Esophagus muscularis mucosa (tissue), 4 donors: ENCODE measurements at regions of chr11 and their contacts with region 1.

Region 1: DNA sequence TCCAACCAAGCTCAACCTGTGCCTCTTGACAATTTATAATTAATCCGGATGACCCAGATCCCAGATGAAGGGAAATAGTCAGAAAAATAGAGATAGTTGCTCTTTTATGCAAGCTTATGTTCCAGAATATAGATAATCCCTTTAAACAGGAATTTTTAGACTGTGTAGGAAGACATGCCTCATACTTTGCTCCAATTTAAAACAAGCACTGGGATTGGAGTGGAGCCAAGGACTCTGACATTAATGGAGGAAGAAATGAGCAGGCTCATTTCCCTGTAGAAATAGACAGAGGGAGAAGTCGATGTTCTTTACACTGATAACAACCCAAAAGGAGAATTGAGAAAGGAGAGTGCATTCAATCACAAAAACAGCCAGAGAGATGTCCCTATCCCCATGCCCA is 70.1 kb upstream of the LRRC55 start:
- DNase-seq: no peak
- H3K4me3 ChIP-seq: no peak overlapping the region
- H3K27ac ChIP-seq: no peak overlapping the region
- H3K4me1 ChIP-seq: no peaks in the 10 kb centered on the region
- H3K27me3 ChIP-seq: no peaks in the 10 kb centered on the region
- CTCF ChIP-seq: no peak
- EP300 ChIP-seq: no peak
- POLR2A ChIP-seq: no peak

Region 2: DNA sequence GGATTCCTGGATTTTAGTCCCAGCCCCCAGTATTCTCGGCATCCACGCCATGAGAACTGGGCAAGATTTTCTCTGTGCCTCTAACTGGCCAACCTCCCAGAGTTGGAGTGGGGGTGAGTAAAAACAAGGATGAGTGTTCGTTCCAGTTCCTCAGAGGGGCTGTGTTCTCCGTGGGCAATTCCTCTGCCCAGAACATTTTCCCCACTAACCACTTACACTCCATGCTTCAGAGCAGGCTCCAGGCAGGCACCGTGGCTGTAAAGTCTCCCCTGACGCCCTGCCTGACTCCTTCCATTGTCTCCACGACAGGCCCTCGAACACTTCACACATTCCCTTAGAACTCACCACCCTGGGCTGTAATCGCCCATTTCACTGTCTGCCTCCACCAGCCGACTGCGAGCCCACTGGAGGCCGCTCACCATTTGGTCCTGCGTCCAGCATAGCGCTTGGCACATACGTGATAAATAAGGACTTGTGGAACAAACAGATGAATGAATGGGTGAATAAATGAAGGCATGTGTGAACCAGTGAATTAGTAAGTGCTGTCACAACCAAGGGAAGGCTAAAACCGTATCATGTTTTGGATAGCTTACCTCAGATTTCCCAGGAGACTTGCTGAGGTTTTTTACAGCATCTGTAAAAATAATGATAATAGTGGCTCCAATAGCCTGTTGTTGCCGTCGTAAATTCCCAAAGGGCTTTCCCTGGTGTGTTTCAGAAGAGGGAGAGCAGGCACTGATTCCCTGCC is 119.3 kb after region 1 on chr11:
- intact Hi-C with region 1: loop called (anchors 5 kb)
- DNase-seq: no peak
- H3K4me3 ChIP-seq: no peak overlapping the region
- H3K27ac ChIP-seq: no peak overlapping the region
- H3K4me1 ChIP-seq: peaks cover 0 to 7% (median 0%) of the 10 kb centered on the region in 4 donors
- H3K27me3 ChIP-seq: peaks cover 0 to 41% (median 2%) of the 10 kb centered on the region in 4 donors
- CTCF ChIP-seq: no peak
- EP300 ChIP-seq: no peak
- POLR2A ChIP-seq: no peak